ENCODE measurements at regions of chr14 and their contacts with region 1.

Region 1: DNA sequence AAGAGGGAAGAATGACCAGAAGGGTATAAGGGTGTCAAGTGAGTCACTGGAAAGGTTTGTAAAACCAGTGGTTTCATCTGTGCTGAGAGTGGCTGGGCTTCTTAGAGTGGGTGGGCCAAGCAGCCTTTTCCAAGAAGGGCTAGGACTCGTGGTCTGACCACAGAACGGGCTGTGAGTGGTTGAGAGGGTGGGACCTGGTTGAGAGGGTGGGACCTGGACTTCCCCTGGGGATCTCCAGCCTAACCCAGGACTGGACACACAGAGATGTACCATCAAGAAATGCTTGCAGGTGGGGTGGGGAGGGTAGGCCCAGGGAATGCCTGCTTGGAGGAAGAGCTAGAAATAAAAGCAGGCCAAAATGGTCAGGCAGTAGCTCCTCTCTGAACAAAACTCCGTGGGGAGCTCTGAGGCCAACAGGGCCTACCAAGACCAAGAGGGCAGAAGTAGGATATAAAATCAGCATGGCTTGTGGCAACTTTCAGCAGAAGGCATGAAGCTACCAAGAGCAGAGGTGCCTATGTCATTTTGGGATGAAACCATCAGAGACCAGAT is 140.5 kb downstream of the FOXN3 start:
- DNase-seq: peak; percentile 92
- H3K4me3 Mint-ChIP-seq: peak overlapping the region; percentile 62
- H3K27ac Mint-ChIP-seq: peak overlapping the region; percentile 94
- H3K4me1 Mint-ChIP-seq: peaks cover 61% of the 10 kb centered on the region
- H3K27me3 Mint-ChIP-seq: no peaks in the 10 kb centered on the region

Region 2: DNA sequence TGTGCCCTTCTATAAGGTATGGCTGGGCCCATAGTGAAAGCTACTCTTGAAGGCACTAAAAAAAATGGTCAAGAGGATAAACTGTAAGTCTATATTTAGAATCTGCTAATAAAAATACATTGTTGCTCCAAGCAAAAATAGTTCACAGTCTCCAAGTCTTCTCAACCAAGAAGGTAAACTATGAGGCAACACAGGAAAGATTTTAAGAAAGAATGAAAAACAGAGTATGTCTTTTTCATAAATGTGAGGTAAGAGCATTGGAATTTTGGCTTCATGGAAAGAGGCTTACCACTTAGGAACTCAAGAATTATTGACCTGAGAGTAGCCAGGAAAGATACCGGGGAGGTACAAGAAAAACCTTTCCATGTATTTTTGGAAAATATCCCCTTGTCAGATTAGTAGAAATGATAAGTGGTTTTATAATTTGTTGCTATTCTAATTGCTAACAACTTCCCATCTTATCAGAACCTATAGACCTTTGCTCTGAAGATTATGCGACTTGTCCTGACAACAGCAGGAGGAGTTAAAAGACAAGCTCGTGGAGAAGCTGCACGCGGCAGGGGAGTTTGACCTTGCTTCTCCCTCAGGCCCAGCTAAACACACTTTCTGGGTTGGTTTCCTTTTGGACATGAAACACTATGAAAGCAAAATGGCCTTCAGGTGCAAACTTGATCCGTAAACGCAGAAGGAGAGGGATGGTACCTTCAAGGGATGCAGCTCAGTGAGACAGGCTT is 97.5 kb before region 1 on chr14:
- intact Hi-C with region 1: loop called (anchors 5 kb)
- DNase-seq: no peak
- H3K4me3 Mint-ChIP-seq: no peak overlapping the region
- H3K27ac Mint-ChIP-seq: no peak overlapping the region
- H3K4me1 Mint-ChIP-seq: peaks cover 5% of the 10 kb centered on the region
- H3K27me3 Mint-ChIP-seq: no peaks in the 10 kb centered on the region

Region 3: DNA sequence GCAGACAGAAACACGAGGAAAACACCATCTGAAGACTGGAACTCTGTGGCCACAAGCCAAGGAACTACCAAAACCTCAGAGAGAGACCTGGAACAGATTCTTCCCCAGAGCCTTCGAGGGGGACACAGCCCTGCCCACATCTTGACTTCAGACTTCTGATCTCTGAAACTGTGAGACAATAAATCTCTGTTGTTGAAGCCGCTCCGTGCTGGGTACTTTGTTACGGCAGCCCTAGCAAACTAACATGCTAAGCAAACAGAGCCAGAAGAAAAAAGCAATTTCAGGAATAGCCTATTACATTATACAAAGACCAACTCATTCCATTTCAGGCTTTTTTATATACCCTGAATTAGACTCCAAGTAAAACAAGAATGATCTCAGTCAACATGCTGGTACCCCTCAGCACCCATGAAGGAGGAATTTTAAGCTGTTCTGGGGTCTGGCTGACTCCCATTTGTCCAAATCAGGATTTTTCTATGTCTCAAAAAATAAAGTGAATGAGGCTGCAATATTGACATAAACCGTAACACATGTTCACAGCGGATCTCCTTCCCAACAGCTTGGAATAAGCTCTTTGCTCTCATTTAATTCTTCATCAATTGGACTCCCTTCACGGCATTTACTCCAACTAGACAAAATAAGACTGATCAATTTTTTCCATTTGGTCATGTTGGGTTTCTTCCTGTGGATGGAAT is 49.6 kb before region 1 on chr14:
- intact Hi-C with region 1: loop called (anchors 5 kb)
- DNase-seq: no peak
- H3K4me3 Mint-ChIP-seq: no peak overlapping the region
- H3K27ac Mint-ChIP-seq: peak overlapping the region; percentile 63
- H3K4me1 Mint-ChIP-seq: peaks cover 14% of the 10 kb centered on the region
- H3K27me3 Mint-ChIP-seq: no peaks in the 10 kb centered on the region

Region 4: DNA sequence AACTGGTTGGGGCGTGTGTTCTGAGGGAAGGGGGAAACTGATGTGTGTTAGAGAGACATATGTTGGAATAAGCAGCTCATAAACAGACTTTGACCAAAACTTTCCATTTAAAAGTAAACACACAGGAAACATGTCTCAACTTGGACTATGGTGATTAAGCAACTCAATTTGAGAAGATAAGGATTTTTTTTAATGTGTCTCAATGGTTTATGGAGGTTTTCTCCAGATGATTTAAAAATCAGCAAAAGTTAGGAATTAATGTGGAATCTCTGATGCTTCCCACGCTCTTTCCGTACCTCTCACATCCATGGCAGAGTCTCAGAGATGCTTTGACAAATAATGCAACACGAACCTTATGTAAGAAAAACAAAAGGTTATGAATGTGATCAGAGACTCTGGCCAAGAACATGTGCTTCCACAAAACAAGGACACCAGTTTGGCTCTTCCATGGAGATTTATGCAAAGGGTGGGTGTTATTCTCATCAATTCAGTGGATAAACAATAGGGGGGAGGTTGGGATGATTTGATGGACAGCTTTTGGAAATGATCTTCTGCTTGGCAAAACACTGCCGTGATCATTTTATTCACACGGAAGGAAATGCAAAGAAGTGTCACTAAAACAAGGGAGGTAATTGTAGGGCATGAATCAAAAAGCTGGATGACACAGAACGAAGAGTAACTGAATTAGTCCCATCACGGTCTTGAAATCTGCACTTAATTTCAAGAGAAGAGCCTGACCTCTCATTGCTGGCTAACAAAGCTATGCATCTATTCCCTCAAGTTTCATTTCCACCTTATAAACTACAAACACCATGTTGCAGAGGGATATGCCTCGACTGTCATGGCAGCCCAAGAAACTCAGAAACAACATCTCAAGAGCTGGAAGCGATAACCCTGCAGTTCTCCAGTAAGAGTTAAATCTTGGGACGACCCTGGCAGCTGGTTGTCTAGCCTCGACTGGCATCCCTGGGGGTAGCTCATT is 64.0 kb after region 1 on chr14:
- intact Hi-C with region 1: loop called (anchors 2 kb)
- DNase-seq: no peak
- H3K4me3 Mint-ChIP-seq: no peak overlapping the region
- H3K27ac Mint-ChIP-seq: peak overlapping the region; percentile 70
- H3K4me1 Mint-ChIP-seq: peaks cover 28% of the 10 kb centered on the region
- H3K27me3 Mint-ChIP-seq: no peaks in the 10 kb centered on the region

Region 5: DNA sequence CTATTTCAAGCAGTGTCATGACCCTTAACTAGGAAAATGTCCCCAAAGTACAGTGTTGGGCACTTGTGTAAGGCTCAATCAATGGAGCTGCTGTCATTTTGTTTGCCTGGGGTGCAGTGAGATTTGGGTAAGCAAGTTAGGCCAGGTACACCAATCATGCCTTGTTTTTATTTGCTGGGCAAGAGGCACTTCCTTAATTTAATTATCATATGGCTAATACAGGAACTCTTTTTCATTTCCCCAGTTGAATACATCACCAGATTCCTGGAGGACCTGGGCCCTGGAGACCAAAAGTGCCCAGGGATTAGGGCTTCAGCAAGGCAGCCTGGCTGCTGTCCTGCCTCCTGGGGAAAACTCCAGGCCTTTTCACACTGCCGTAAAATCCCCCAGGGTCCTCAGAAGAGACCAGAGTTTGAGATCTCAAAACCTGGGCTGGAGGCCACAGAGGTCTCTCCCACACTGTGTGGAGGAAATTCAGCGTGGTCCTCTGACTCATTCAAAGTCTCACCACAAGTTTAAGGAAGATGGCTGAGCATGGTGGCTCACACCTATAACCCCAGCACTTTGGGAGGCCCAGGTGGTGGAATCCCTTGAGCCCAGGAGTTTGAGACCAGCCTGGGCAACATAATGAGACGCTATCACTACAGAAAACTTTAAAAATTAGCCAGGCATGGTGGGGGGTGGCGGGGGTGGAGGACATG is 168.9 kb after region 1 on chr14:
- intact Hi-C with region 1: loop called (anchors 1 kb)
- DNase-seq: peak; percentile 71
- H3K4me3 Mint-ChIP-seq: peak overlapping the region; percentile 55
- H3K27ac Mint-ChIP-seq: peak overlapping the region; percentile 85
- H3K4me1 Mint-ChIP-seq: peaks cover 44% of the 10 kb centered on the region
- H3K27me3 Mint-ChIP-seq: no peaks in the 10 kb centered on the region

Measured in activated CD4-positive, alpha-beta T cell treated with anti-CD3 and anti-CD28 coated beads, Interleukin-2, amount 10 ng/mL, durations not matched to agents 24 days and 14 days (primary cell).